MCF 10A (cell line): ENCODE measurements at regions of chr11 and their contacts with region 1.

Region 1: DNA sequence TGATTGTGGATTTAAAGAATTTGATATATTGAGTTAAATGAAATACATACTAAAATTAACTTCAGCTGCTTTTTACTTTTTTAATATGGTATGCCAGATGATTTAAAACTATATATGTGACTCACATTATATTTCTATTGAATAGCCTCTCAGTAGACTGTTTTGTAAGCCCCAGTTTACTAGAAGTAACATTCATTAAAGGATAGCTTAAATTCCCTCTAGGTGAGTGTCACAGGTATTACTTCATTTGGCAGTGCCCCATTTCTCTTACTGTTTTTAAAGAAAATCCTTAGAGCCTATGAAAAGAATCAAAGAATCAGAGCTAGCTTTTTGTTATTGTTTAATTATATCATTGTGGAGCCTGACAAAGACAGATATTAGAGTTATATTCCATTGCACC is 48.6 kb downstream of the ZC3H12C start:
- DNase-seq: peak; percentile 31
- H3K4me3 Mint-ChIP-seq: no peak overlapping the region
- H3K27ac Mint-ChIP-seq: no peak overlapping the region
- H3K4me1 Mint-ChIP-seq: peaks cover 18% of the 10 kb centered on the region
- H3K27me3 Mint-ChIP-seq: no peaks in the 10 kb centered on the region
- CTCF ChIP-seq: no peak

Region 2: GRCh38 chr11:110032957-110033570 is 108.7 kb before region 1 on chr11:
- CTCF ChIA-PET with region 1: no interaction called
- POLR2A ChIA-PET with region 1: no interaction called
- intact Hi-C with region 1: no loop called
- DNase-seq: no peak
- H3K4me3 Mint-ChIP-seq: no peak overlapping the region
- H3K27ac Mint-ChIP-seq: no peak overlapping the region
- H3K4me1 Mint-ChIP-seq: peaks cover 6% of the 10 kb centered on the region
- H3K27me3 Mint-ChIP-seq: no peaks in the 10 kb centered on the region
- CTCF ChIP-seq: no peak

Region 3: DNA sequence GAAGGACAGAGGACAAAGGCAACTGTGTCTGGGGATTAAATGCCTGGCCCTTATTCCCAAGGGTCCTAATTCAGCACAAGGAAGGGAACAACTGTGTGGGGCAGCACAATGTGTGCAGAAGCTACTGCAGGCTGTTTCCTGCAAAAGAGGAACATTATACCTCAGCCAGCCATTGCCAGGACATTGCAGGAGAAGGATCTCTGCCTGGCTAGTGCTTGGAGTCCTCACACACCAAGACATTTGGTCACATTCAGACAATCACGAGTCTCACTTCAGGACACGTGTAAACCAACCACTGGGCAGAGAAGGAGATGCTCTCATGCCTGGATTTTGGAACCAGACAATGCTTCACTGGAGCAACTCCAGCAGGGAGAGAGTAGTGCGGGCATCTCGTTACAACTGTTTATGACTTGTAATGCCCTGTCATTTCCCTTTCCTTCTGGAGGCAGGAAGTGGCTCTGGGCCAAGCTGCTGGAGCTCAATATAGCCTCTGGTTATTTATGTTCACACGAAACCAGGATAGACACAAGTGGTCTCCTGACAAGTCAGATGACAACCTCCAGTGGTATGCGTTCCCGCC is 72.6 kb before region 1 on chr11:
- CTCF ChIA-PET with region 1: no interaction called
- POLR2A ChIA-PET with region 1: no interaction called
- intact Hi-C with region 1: no loop called
- DNase-seq: peak; percentile 89
- H3K4me3 Mint-ChIP-seq: no peak overlapping the region
- H3K27ac Mint-ChIP-seq: peak overlapping the region; percentile 73
- H3K4me1 Mint-ChIP-seq: peaks cover 14% of the 10 kb centered on the region
- H3K27me3 Mint-ChIP-seq: no peaks in the 10 kb centered on the region
- CTCF ChIP-seq: no peak

Region 4: DNA sequence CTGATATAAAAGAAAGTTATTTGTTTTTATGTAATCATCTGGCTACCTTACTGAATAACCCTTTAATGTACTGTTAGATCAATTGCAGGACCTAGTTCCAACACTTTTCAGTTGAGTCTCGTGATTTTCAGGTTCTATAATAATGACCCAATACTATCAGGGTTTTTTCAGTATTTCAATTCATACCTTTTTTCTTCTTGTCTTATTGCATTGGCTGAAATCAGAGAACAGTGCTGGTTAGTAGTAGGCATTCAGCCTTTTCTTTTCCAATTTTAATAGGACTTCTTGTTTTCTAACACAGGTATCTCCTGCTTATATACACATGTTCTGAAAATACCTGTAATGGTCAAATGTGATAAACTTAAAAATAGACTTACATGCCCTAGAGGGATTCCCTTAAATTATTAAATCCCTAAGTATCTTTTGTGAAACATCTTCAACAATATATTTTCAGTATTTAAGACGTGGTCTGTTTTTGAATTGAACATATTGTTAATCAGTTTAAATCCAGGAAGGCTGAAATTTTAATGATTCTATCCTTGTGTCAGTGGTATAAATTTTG is 35.0 kb before region 1 on chr11:
- CTCF ChIA-PET with region 1: no interaction called
- POLR2A ChIA-PET with region 1: no interaction called
- intact Hi-C with region 1: no loop called
- DNase-seq: no peak
- H3K4me3 Mint-ChIP-seq: no peak overlapping the region
- H3K27ac Mint-ChIP-seq: no peak overlapping the region
- H3K4me1 Mint-ChIP-seq: no peaks in the 10 kb centered on the region
- H3K27me3 Mint-ChIP-seq: no peaks in the 10 kb centered on the region
- CTCF ChIP-seq: no peak

Region 5: DNA sequence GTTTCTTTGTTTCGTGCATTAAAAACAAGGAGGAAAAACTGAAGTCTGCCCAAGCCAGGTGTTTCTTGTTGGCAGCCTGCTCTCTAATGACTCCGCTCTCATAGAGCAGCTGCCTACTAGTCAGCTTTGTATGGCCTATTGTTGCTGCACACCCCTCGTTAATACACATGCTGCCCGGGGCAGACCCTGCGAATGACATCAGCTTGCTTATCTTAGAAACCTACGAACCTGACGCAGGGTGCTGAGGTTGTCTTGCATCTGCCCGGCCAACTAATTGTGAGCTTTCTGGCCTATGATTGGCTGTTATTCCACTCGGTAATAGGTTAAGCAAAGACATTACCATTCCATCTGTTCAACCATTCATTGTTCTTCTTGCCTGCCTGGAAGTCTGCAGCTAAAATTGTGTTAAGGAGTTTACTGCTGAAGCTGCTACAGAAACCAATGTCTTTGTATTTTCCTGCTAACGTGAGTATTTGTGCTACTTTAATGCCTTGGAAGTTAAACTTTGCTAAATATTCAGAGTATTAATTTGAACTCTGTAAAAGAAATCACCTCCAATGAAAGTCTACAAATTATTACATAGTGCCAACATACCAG is 11.1 kb before region 1 on chr11:
- CTCF ChIA-PET with region 1: interaction called, 3 read pairs
- POLR2A ChIA-PET with region 1: interaction called, 22 read pairs
- intact Hi-C with region 1: no loop called
- DNase-seq: no peak
- H3K4me3 Mint-ChIP-seq: no peak overlapping the region
- H3K27ac Mint-ChIP-seq: peak overlapping the region; percentile 49
- H3K4me1 Mint-ChIP-seq: peaks cover 33% of the 10 kb centered on the region
- H3K27me3 Mint-ChIP-seq: no peaks in the 10 kb centered on the region
- CTCF ChIP-seq: no peak